CD8-positive, alpha-beta T cell (primary cell): ENCODE measurements at regions of chr5 and their contacts with region 1.

Region 1: DNA sequence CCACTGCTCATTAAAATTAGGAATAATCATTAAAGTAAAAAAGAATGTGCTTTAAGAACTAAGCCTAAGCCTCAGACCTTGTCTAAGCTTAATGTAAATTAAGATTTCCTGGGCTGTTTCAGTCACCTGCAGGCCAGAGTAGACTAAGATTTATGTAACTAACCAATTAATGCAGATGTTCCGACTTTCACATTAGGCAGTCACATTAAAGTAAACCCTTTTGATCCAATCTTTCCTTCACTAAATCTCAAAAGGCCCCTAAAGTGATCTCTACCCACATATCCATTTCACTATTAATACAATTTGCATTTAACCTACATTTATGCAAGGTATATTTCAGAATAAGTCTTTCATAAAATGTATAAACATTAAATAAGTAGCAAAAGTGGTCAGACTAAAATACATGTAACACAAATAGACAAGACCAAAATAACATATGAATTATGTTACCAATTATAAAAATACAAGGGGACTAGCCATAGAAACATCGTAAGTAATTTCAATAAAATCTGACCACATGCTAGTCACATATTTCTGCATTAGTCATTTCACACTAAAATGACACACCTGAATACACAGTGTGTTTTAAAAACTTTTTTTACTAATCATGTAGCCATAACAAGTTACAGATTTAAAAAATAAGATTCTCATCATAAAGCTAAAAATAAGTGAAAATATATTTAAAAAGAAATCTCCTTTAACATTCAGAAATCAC is 7.7 kb downstream of the NR3C1 start:
- DNase-seq: no peak
- ATAC-seq: no peak
- H3K4me3 ChIP-seq: no peak overlapping the region
- H3K4me3 Mint-ChIP-seq: peak overlapping the region; percentile 95
- H3K27ac ChIP-seq: no peak overlapping the region
- H3K27ac Mint-ChIP-seq: no peak overlapping the region
- H3K4me1 ChIP-seq: peaks cover 80% of the 10 kb centered on the region
- H3K4me1 Mint-ChIP-seq: peaks cover 82% of the 10 kb centered on the region
- H3K27me3 ChIP-seq: no peaks in the 10 kb centered on the region
- H3K27me3 Mint-ChIP-seq: no peaks in the 10 kb centered on the region
- CTCF ChIP-seq: no peak

Region 2: DNA sequence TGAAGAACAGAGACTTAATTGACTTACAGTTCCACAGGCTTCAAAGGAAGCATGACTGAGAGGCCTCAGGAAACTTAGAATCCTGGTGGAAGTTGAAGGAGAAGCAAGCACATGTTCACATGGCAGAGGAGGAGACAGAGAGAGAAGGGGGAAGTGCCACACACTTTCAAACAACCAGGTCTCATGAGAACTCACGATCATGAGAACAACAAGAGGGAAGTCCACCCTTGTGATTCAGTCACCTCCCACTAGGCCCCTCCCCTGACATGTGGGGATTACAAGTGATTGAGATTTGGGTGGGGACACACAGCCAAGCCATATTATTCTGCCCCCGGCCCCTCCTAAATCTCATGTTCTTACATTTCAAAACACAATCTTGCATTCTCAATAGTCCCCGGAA is 11.8 kb before region 1 on chr5:
- CTCF ChIA-PET with region 1: no interaction called
- POLR2A ChIA-PET with region 1: no interaction called
- intact Hi-C with region 1: loop called in 1 of 2 experiments (anchors 2 kb)
- DNase-seq: no peak
- ATAC-seq: no peak
- H3K4me3 ChIP-seq: no peak overlapping the region
- H3K4me3 Mint-ChIP-seq: no peak overlapping the region
- H3K27ac ChIP-seq: no peak overlapping the region
- H3K27ac Mint-ChIP-seq: no peak overlapping the region
- H3K4me1 ChIP-seq: peaks cover 47% of the 10 kb centered on the region
- H3K4me1 Mint-ChIP-seq: peaks cover 91% of the 10 kb centered on the region
- H3K27me3 ChIP-seq: no peaks in the 10 kb centered on the region
- H3K27me3 Mint-ChIP-seq: no peaks in the 10 kb centered on the region
- CTCF ChIP-seq: no peak